Left colon (tissue), 2 donors: ENCODE measurements at regions of chr3 and their contacts with region 1.

Region 1: DNA sequence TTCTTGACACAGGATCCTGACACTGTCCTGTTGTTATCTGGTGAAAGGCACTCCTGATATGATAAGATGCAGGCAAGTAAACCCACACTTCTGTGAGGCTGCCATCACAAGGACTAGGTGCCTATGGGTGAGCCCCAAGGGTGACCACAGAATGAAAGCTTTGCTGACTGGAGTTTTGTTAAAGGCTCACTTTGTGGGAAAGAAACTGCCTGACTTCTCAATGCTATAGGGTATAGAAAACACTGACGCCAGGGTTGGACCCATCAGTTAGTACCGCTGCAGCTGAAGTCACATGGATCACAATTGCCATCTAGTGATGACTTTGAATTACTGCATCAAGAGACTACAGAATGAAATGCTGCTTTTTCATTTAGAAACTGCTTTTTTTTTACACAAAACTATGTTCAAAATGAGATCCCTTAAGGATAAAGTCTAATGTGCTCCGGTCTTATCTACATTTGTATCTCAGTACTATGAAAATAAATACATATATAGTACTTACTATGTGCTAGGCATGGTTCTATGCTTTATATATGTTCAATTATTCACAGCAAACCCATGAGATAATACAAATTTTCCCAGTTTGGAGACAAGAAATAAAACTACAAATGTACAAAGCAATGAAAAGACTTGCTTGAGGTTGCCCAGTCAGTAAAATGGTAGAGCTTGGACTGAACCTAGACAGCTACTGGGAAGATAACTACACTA is 64.2 kb upstream of the CMSS1 start:
- DNase-seq: peak in 1 of 2 donors; percentile 5
- ATAC-seq: peak; percentile 62

Region 2: GRCh38 chr3:99023590-99024192 is 729.7 kb before region 1 on chr3:
- intact Hi-C with region 1: loop called in 1 of 2 experiments (anchors 5 kb)
- DNase-seq: no peak
- ATAC-seq: no peak

Region 3: DNA sequence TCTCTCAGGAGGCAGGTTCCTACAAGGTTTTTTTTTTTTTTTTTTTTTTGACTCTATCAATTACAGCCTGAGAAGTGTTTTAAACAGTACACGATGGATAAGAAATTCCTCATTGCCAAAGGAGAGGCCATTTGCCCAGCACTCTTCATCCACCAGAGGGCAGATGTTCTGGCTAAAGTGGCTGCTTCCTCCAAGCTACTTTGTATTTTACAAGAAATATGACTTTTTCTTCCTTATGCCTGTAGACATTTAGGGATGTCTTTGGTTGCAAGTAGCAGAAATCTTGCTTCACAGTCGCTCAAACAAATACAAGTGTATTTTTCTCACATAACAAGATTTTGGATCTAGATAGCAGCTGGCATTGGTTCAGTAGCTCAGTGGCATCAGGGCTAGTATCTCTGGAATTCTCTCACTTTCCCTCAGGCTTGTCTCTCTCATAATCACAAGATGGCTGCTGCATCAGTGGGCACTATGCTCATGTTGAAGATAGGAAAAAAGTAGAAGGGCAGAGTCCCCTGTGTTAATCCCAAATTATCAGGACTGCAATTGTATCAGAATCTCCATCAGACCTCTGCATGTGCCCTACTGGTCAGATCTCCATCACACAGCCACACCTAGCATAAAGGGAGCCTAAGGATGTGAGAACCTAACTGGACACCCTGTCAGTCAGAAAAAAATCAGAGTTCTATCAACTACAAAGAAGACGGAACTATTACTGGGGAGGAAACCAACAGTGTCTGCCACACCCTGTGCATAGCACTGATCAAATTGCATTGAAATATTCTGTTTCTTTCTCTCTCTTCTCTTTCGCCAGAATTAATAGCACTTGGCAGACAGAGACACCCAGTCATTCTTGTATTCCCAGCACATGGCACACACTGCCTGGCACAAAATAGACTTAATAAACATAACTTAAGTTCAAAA is 253.9 kb before region 1 on chr3:
- intact Hi-C with region 1: loop called in 1 of 2 experiments (anchors 10 kb)
- DNase-seq: peak in 1 of 2 donors; percentile 18
- ATAC-seq: peak; percentile 50